ENCODE measurements at regions of chr17 and their contacts with region 1.

Region 1: GRCh38 chr17:32444308-32445073 is at the start of gene PSMD11:
- DNase-seq: peak; percentile 95 to 98
- ATAC-seq: peak; percentile 85 to 86
- H3K4me3 ChIP-seq: peak within 1 kb of the TSS; percentile 89 to 100 (median 92)
- H3K27ac ChIP-seq: peak within 1 kb of the TSS; percentile 90 to 99 (median 98)
- H3K4me1 ChIP-seq: peaks cover 32 to 37% of the 10 kb centered on the region in 2 donors
- H3K27me3 ChIP-seq: no peaks in the 10 kb centered on the region
- CTCF ChIP-seq: peak; percentile 78 to 95 (median 87)
- POLR2A ChIP-seq: peak; percentile 90 to 92
- total RNA-seq, gene PSMD11: 81.7 to 215 (median 191) TPM

Region 2: GRCh38 chr17:32341857-32342602 is 102.5 kb before region 1 on chr17 and contains the start of gene C17orf75:
- in situ Hi-C with region 1: no loop called
- intact Hi-C with region 1: loop called (anchors 5 kb)
- DNase-seq: peak; percentile 47 to 75
- ATAC-seq: peak; percentile 93
- H3K4me3 ChIP-seq: peak within 1 kb of the TSS; percentile 63 to 79 (median 70)
- H3K27ac ChIP-seq: peak within 1 kb of the TSS; percentile 76 to 81 (median 80)
- H3K4me1 ChIP-seq: peaks cover 0 to 18% of the 10 kb centered on the region in 2 donors
- H3K27me3 ChIP-seq: no peaks in the 10 kb centered on the region
- CTCF ChIP-seq: no peak
- POLR2A ChIP-seq: peak in 1 of 2 donors; percentile 20
- total RNA-seq, gene C17orf75: 4.1 to 8.9 (median 7.7) TPM

Region 3: DNA sequence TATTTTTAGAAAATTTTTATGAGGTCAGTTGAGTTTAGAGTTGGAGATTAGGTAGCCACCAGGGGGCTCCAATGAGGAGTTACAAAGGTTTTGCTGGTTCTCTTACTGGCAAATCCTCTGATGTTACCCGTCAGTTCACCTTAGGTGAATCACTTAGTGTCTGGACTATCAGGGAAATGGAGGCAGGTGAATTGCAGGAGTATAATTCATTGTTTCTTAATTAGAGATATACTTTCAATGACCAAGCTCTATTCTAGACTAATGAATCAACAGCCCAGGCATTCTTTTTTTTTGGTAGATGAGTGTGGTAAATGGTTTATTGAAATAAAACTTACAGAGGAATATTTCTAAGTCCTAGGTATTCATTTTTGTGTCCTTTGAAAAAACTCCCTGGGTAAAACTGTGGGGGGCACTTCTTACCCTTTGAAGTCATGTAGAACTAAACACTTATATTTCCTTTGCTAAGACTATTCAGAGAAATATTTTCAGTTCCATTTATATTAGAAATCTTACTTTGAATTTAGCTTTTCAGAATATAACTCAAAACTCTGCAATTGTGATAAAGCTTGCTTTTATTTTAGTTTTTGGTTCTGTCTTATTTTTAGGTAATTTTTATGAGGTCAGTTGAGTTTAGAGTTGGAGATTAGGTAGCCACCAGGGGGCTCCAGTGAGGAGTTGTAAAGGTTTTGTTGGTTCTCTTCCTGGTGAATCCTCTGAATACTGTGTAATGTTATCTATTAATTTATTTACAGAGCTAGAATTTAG is 17.5 kb after region 1 on chr17:
- in situ Hi-C with region 1: no loop called
- intact Hi-C with region 1: loop called (anchors 2 kb)
- DNase-seq: no peak
- ATAC-seq: peak in 1 of 2 donors; percentile 76
- H3K4me3 ChIP-seq: no peak overlapping the region
- H3K27ac ChIP-seq: peak overlapping the region in 1 of 4 donors; percentile 1
- H3K4me1 ChIP-seq: peaks cover 0 to 4% of the 10 kb centered on the region in 2 donors
- H3K27me3 ChIP-seq: no peaks in the 10 kb centered on the region
- CTCF ChIP-seq: peak in 4 of 5 experiments; percentile 26 to 56 (median 34)
- POLR2A ChIP-seq: no peak